ENCODE measurements at regions of chr3 and their contacts with region 1.

Region 1: DNA sequence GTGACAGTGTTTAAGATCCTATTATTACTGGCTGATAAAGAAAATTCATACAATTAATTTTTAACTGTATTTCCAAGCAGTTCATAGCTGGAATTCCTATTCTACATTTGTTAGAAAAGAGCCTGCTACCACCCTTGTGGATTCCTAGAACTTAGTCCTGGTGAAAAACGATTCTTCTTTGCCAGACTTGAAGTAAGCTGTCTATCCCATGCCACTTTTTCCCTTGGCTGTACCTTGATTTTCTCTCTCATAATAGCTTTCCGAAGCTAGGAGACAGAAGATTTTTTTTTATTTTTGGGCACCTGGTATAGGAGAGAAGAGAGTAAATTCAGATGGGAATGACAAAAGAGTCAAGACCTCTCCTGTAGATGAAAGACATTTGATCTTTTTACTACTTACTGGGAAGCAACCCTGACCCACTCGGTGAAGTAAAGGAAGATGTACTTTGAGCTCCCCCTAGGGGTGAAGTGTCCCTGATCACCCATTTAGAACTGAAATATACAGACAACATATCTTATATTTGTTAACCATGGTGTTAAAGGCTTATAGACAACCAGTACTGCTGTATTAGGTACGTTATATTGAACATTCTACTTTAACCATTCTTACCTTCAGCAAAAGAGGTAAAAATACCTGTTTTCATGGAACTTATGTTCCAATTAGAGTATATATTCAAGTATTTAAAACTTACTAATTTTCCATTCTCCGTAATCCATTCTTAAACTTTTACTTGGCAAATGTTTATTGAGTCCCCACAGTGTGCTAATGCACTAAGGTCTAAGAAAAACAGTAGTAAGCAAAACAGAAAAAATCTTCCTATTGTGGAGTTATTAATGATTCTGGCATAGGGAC is 36.2 kb upstream of the C3orf38 start:
- DNase-seq: no peak
- ATAC-seq: peak; percentile 89
- H3K4me3 Mint-ChIP-seq: no peak overlapping the region
- H3K27ac Mint-ChIP-seq: no peak overlapping the region
- H3K4me1 Mint-ChIP-seq: peaks cover 7% of the 10 kb centered on the region
- H3K27me3 Mint-ChIP-seq: no peaks in the 10 kb centered on the region
- CTCF ChIP-seq: no peak

Region 2: DNA sequence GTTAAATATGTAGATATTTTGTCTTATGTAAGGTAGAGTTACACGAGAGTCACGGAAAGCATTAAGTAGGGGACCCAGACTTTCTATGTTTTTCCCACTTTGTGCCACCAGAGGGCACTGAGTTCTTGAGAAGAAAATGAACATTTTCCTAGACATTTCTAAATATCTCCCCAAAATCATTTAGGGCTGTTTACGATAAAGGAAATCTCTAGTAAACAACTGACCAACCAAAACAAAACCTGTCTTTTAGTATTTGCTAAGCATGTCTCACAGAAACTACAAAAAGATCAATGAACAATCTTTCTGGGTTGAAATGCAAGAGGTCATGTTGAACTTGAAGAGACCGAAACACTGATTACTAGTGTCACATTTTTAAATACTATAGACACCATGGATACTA is 853.3 kb before region 1 on chr3:
- CTCF ChIA-PET with region 1: interaction called, 8 read pairs
- POLR2A ChIA-PET with region 1: no interaction called
- intact Hi-C with region 1: loop called (anchors 5 kb)
- DNase-seq: no peak
- ATAC-seq: peak; percentile 45
- H3K4me3 Mint-ChIP-seq: no peak overlapping the region
- H3K27ac Mint-ChIP-seq: no peak overlapping the region
- H3K4me1 Mint-ChIP-seq: peaks cover 4% of the 10 kb centered on the region
- H3K27me3 Mint-ChIP-seq: no peaks in the 10 kb centered on the region
- CTCF ChIP-seq: peak; percentile 24

Region 3: DNA sequence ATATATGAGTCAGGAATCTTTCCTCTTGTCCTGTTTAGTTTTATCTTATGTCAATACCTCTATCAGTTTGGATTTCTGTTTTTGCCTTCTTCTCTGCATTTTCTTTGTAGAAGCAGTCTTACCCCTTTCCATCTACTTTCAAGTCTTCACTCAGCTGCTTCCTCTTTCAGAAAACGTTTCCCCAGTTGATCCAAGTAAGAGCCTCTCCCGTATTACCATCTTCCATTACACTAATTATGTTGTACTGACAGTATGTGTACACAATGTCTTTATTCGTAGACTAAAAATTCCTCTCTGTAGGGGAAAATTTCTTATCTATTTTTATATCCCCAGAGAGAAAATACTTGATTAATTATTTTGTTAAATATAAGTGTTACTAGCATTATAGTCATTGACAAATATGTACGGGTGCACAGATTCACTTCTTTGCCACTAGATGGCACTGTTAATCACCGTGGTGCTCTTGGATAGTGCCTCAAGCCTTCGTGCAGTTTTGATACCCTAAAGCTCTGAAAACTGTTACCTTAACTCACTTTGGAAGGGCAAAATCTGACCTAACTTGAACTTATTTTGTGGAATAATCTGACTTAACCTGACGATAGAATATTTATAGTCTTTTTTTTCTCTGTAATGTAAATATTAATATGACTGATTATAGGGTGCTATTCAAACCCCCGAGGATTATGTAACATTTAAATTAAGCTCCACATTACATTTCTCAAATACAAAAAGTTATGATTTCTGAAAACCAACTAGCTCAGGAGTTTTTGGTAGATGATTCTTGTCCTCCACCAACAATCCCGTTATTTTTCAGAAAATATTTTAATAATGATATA is 763.0 kb before region 1 on chr3:
- CTCF ChIA-PET with region 1: interaction called, 33 read pairs
- POLR2A ChIA-PET with region 1: no interaction called
- intact Hi-C with region 1: loop called (anchors 1 kb)
- DNase-seq: no peak
- ATAC-seq: peak; percentile 75
- H3K4me3 Mint-ChIP-seq: no peak overlapping the region
- H3K27ac Mint-ChIP-seq: no peak overlapping the region
- H3K4me1 Mint-ChIP-seq: no peaks in the 10 kb centered on the region
- H3K27me3 Mint-ChIP-seq: peaks cover 4% of the 10 kb centered on the region
- CTCF ChIP-seq: peak; percentile 86

Region 4: DNA sequence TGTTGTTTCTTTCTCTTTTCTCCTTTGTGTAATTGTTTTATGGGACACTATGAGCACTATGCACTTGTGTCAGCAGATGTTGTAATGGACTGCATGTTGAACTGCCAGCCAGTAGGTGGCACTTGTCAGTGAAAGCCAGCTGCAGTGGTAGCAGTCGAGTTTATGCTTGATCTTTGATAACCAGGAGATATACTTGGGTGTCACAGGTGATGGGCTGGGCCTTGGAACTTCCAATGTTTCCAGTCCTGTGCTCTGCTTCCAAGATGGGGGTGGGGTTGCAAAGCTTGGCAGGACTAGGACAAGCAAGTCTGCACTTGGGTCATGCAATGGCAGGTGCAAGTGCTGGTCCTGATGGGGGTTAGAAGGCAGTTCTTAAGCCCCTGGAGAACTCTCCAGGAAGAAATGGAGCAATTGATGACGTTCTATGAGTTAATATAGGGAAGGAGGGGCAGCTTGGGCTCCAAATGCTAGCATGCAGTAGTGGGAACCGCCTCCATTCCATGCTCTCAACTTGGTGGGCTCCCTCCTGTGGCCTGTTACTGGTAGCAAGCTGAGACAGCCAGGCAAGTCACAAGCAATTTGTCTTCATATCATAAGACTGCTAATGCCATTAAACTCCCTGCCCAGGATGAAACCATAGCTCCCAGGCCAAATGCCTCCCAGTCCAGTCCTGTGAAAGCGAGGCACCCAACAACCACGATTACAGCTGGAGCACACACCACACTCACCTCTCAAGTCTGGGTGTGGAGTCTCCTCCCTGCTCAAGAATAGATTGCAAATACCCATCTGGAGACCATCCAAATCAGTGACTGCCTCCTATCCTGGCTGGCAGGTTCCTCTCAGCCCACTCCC is 342.0 kb before region 1 on chr3:
- CTCF ChIA-PET with region 1: interaction called, 23 read pairs
- POLR2A ChIA-PET with region 1: no interaction called
- intact Hi-C with region 1: loop called (anchors 1 kb)
- DNase-seq: no peak
- ATAC-seq: peak; percentile 75
- H3K4me3 Mint-ChIP-seq: no peak overlapping the region
- H3K27ac Mint-ChIP-seq: no peak overlapping the region
- H3K4me1 Mint-ChIP-seq: no peaks in the 10 kb centered on the region
- H3K27me3 Mint-ChIP-seq: peaks cover 11% of the 10 kb centered on the region
- CTCF ChIP-seq: no peak

Region 5: GRCh38 chr3:88058591-88059368 is 54.8 kb before region 1 on chr3 and contains the starts of genes CGGBP1 and ZNF654:
- CTCF ChIA-PET with region 1: interaction called, 8 read pairs
- POLR2A ChIA-PET with region 1: interaction called, 13 read pairs
- intact Hi-C with region 1: loop called (anchors 1 kb)
- DNase-seq: peak; percentile 98
- ATAC-seq: peak; percentile 91
- H3K4me3 Mint-ChIP-seq: peak within 1 kb of the TSS; percentile 97
- H3K27ac Mint-ChIP-seq: peak within 1 kb of the TSS; percentile 97
- H3K4me1 Mint-ChIP-seq: peaks cover 58% of the 10 kb centered on the region
- H3K27me3 Mint-ChIP-seq: no peaks in the 10 kb centered on the region
- CTCF ChIP-seq: no peak
- total RNA-seq, gene CGGBP1: 84.6 and 90.8 TPM in 2 replicates
- total RNA-seq, gene ZNF654: 11.2 and 13.6 TPM in 2 replicates